RWPE1 (cell line): ENCODE measurements at regions of chr2 and their contacts with region 1.

Region 1: DNA sequence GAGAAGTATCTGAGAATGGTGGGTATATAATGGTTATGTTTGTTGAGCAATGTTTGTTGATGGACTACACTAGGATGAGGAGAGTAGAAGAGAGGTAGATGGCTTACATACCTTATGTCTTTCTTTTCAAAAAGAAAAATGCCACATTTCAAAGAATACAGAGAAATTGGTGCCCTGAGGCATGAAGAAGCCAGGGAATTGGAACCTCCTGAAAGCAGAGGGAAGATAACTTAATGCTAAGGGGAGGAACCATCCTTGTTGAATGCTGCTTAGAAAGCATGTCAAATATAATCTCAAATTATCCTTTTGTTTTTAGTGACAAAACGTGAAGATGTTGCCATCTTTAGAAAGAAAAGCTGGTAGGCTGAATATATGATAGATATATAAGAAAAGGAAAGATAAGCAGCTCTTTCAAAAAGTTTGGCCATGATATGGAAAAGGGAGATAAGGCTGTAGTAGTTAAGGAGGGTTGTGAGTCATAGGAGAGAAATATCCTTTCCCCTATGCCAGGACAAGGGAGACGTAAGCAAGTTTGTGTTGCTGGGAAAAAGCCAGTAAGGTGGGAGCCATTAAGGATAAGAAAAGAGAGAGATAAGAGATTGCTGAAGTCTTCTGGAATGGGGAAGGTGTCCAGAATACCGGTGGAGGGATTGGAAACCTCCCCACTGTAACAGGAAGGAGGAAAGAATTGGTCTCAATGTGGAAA is 66.3 kb downstream of the SCN2A start:
- DNase-seq: no peak
- H3K27ac ChIP-seq: no peak overlapping the region
- CTCF ChIP-seq: no peak

Region 2: DNA sequence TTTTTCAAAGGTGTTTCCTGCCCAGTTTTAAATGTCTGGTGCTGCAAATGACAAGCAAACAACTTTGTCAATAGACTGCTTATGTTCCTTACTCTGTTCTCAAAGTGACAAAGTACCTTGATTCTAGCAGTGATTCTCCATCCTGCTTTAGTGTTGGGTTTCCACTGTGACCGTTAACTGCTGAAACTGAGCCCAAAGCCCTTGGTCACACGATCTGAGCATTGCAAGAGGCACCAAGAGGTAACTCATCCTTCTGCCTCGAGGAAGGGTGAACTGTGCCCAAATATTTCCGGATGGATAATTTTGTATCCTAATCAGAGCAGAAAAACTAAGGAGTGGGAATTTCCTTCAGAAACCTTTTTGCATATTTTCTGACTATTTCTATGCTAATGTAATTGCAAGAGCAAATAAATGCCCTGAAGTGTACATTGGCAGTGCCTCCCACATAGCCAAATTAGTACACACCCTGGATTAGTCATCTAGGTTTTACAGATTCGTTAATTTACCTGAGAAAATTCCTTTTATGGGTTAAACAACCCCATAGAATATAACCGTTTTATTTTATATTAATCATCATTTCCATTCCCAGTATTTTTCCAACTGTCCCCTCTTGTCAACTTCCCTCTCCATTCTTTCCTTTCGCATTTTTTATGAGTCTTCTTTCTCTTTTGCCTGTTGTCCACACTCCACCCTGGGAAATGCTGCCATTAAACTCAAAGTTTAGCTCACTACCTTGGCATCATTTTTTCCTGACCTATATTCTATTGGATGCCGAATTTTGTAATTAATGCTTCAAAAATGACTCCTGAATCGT is 432.2 kb before region 1 on chr2:
- CTCF ChIA-PET with region 1: no interaction called
- POLR2A ChIA-PET with region 1: no interaction called
- DNase-seq: peak; percentile 26
- H3K27ac ChIP-seq: no peak overlapping the region
- CTCF ChIP-seq: no peak

Region 3: DNA sequence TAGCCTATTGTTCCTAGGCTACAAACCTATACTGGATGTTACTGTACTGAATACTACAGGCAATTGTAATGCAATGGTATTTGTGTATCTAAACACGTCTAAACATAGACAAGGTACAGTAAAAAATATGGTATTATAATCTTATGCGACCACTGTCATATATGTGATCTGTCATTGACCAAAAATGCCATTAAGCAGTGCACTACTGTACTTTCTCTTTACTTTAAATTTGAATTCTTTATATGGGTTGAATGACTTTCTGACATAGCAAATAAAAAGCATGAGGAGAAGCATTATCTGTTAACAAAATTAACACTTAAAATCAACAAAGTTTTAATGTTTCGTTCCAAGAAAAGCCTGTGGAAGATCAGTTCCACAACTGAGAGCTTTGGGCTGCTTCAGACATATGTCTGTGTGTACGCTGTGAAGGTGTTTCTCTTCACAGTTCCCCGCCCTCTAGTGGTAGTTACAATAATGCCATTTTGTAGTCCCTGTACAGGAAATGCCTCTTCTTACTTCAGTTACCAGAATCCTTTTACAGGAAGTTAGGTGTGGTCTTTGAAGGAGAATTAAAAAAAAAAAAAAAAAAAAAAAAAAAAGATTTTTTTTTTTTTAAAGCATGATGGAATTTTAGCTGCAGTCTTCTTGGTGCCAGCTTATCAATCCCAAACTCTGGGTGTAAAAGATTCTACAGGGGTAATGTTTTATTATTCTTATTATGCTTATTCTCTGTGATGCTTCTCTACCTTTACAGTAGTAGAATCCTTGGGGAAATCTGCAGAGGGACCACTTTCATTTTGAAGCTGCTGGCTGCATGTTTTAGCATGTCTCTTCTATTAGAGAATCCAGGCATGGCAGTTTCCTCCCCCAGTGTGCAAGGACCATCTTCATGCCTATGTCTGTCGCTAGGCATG is 11.8 kb before region 1 on chr2:
- CTCF ChIA-PET with region 1: interaction called, 13 read pairs
- POLR2A ChIA-PET with region 1: no interaction called
- DNase-seq: peak; percentile 66
- H3K27ac ChIP-seq: no peak overlapping the region
- CTCF ChIP-seq: peak; percentile 78